Activated CD4-positive, alpha-beta memory T cell treated with anti-CD3 and anti-CD28 coated beads, Interleukin-2, amount 10 ng/mL, durations not matched to agents 7 days and 5 days (primary cell): ENCODE measurements at regions of chr13 and their contacts with region 1.

Region 1: GRCh38 chr13:94549232-94550061 is 46.5 kb downstream of the TGDS start:
- DNase-seq: peak; percentile 90
- H3K4me3 Mint-ChIP-seq: peak overlapping the region; percentile 94
- H3K27ac Mint-ChIP-seq: peak overlapping the region; percentile 91
- H3K4me1 Mint-ChIP-seq: peaks cover 16% of the 10 kb centered on the region
- H3K27me3 Mint-ChIP-seq: peaks cover 8% of the 10 kb centered on the region

Region 2: DNA sequence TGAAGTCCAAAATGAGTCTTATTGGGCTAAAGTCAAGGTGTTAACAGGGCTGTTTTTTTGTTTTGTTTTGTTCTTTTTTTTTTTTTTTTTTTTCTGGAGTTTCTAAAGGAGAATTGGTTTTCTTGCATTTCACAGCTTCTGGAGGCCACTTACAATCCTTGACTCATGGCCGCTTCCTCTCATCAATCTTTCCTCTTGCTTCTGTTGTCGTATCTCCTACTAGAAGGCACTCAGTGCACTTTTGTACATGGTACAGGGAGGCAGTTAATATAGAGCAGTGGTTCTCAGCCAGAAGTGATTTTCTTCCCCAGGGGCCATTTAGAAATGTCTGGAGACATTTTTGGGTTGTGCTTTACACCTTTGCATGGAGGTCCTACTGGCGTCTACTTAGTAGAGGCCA is 616.5 kb before region 1 on chr13:
- CTCF ChIA-PET with region 1: no interaction called
- POLR2A ChIA-PET with region 1: no interaction called
- DNase-seq: no peak
- H3K4me3 Mint-ChIP-seq: no peak overlapping the region
- H3K27ac Mint-ChIP-seq: no peak overlapping the region
- H3K4me1 Mint-ChIP-seq: no peaks in the 10 kb centered on the region
- H3K27me3 Mint-ChIP-seq: peaks cover 1% of the 10 kb centered on the region

Region 3: GRCh38 chr13:94534166-94534565 is 15.3 kb before region 1 on chr13:
- CTCF ChIA-PET with region 1: interaction called, 3 read pairs
- POLR2A ChIA-PET with region 1: interaction called, 13 read pairs
- DNase-seq: no peak
- H3K4me3 Mint-ChIP-seq: no peak overlapping the region
- H3K27ac Mint-ChIP-seq: no peak overlapping the region
- H3K4me1 Mint-ChIP-seq: peaks cover 8% of the 10 kb centered on the region
- H3K27me3 Mint-ChIP-seq: peaks cover 21% of the 10 kb centered on the region

Region 4: DNA sequence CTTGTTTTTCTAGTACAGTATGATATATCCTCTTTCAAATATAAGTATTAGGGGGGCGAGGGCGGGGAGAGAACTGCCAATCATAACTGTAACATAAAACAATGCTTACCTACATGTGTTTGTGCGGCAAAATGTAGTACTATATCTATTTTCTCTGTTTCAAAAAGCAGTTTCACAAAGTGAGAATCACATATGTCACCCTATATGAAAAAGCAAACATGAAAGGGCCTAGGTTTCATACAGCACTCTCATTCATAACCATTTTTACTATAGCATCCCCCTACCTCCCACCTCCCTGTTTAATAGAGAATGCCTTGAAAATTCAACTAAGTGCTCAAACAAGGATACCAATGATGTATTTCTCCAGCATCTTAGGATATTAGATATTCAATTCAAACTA is 41.3 kb after region 1 on chr13:
- CTCF ChIA-PET with region 1: interaction called, 10 read pairs
- POLR2A ChIA-PET with region 1: interaction called, 83 read pairs
- DNase-seq: no peak
- H3K4me3 Mint-ChIP-seq: no peak overlapping the region
- H3K27ac Mint-ChIP-seq: no peak overlapping the region
- H3K4me1 Mint-ChIP-seq: peaks cover 36% of the 10 kb centered on the region
- H3K27me3 Mint-ChIP-seq: no peaks in the 10 kb centered on the region

Region 5: GRCh38 chr13:94595950-94596574 is 46.6 kb after region 1 on chr13 and contains the start of gene TGDS:
- CTCF ChIA-PET with region 1: interaction called, 10 read pairs
- POLR2A ChIA-PET with region 1: interaction called, 83 read pairs
- DNase-seq: peak; percentile 92
- H3K4me3 Mint-ChIP-seq: peak within 1 kb of the TSS; percentile 86
- H3K27ac Mint-ChIP-seq: peak within 1 kb of the TSS; percentile 87
- H3K4me1 Mint-ChIP-seq: peaks cover 41% of the 10 kb centered on the region
- H3K27me3 Mint-ChIP-seq: no peaks in the 10 kb centered on the region
- total RNA-seq, gene TGDS: 18.3 to 19.7 TPM

Region 6: DNA sequence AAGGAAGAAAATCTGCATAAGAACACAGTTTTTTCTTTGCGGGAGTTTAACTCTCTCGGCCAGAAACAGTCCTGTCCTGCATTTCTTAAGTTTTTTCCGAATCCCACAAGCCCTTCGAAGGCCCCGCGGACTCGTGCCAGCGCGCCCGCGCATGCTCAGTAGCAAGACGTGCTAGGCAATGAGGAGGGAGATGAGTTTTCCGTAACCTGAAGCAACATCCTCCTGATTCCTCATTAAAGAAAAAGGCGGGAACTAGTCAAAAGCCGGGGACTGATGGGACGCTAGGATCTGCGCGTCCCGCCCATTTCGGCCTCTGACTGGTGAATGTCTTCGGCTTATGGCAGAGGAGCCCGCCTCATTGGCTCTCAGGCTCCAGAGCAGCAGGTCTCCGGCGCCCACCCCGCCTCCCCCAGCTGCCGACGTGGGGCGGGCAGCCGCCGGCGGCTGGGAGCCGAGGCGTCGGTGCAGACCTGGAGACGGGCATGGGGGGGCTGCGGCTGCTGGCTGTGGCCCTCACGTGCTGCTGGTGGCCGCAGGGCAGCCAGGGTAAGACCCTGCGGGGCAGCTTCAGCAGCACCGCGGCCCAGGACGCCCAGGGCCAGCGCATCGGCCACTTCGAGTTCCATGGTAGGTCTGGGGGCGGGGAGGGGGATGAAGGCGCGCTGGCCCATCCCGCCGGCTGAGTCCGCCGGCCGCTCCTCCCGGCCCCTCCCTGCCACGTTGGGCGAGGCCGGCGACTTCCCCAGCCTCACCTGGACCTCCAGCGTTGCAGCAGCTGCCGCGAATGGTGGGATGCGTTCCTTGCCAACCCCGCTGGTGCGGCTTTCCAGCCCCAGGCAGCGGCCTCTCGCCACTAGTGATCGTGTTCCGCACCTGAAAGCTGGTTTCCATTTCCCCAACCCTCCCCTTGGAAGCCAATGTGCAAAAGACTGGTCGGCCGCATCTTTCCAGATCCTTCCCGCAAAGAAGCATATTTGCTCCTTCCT is 52.3 kb after region 1 on chr13 and contains the start of gene GPR180:
- CTCF ChIA-PET with region 1: interaction called, 10 read pairs
- POLR2A ChIA-PET with region 1: interaction called, 83 read pairs
- DNase-seq: peak; percentile 94
- H3K4me3 Mint-ChIP-seq: peak within 1 kb of the TSS; percentile 82
- H3K27ac Mint-ChIP-seq: peak within 1 kb of the TSS; percentile 66
- H3K4me1 Mint-ChIP-seq: peaks cover 44% of the 10 kb centered on the region
- H3K27me3 Mint-ChIP-seq: no peaks in the 10 kb centered on the region
- total RNA-seq, gene GPR180: 7.8 to 8.0 TPM

Region 7: GRCh38 chr13:94608586-94608985 is 59.1 kb after region 1 on chr13:
- CTCF ChIA-PET with region 1: interaction called, 4 read pairs
- POLR2A ChIA-PET with region 1: interaction called, 10 read pairs
- DNase-seq: no peak
- H3K4me3 Mint-ChIP-seq: no peak overlapping the region
- H3K27ac Mint-ChIP-seq: no peak overlapping the region
- H3K4me1 Mint-ChIP-seq: peaks cover 33% of the 10 kb centered on the region
- H3K27me3 Mint-ChIP-seq: no peaks in the 10 kb centered on the region